ENCODE measurements at regions of chr7 and their contacts with region 1.

Region 1: DNA sequence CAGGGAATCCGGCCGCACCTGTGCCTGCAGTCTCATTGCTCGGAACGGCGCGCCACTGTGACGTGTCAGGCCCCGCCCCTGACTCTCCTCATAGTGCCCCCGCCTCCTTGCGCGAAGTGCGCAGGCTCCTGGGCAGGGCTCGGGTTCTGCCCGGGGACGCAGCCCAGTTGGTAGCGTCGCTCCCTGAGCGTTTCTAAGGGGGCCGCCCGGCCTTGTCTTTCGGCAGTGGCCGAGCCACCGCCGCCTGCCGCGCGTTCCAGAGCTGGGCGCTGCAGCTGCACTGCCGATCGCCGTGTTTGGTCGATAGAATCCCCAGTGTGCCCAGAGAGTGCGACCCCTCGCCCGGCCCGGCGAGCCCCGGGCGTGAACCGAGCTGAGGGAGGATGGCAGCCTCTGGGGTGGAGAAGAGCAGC is at the start of gene KLHL7:
- DNase-seq: peak; percentile 99
- total RNA-seq, gene KLHL7: 103 TPM

Region 2: GRCh38 chr7:23181684-23182553 is 76.3 kb after region 1 on chr7 and contains the start of gene NUP42:
- intact Hi-C with region 1: loop called (anchors 2 kb)
- DNase-seq: peak; percentile 97
- total RNA-seq, gene NUP42: 24.0 TPM

Region 3: GRCh38 chr7:23247603-23248335 is 142.1 kb after region 1 on chr7:
- intact Hi-C with region 1: loop called (anchors 2 kb)
- DNase-seq: peak; percentile 82

Region 4: GRCh38 chr7:23544913-23545354 is 439.3 kb after region 1 on chr7:
- intact Hi-C with region 1: no loop called
- DNase-seq: no peak